ENCODE measurements at regions of chr6 and their contacts with region 1.

Region 1: GRCh38 chr6:134882426-134883038 is 67.4 kb downstream of the ALDH8A1 start:
- DNase-seq: peak; percentile 80
- H3K4me3 Mint-ChIP-seq: no peak overlapping the region
- H3K27ac Mint-ChIP-seq: no peak overlapping the region
- H3K4me1 Mint-ChIP-seq: no peaks in the 10 kb centered on the region
- H3K27me3 Mint-ChIP-seq: peaks cover 10% of the 10 kb centered on the region

Region 2: DNA sequence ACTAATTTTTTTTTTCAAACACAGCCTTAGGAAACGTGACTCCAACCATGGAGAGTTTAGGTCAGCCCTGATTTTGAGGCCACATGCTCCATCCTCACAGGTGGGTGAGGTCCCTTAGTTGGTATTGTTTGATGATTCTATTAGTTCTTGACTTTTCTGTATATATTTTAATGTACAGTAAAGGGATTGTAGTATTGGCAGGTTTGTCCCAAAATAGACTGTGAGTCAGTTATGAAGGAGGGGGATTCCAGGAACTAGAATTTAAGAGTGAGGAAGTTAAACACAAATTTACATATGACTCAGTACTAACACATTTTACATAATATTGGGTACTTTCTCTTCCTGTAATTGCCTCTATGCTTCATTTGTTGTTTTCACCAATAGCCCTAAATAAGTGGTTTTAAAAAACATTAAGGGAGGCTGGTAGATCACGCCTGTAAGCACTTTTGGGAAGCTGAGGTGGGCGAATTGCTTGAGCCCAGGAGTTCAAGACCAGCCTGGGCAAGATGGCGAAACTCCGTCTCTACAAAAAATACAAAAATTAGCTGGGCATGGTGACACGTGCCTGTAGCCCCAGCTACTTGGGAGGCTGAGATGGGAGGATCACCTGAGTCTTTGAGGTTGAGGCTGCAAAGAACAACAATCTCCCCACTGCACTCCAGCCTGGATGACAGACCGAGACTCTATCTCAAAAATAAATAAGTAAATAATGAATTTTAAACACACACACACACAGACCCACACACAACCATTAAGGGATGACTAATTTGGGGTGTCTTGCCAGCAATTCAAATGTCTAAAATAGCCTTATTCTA is 646.4 kb before region 1 on chr6:
- CTCF ChIA-PET with region 1: no interaction called
- intact Hi-C with region 1: no loop called
- DNase-seq: peak; percentile 41
- H3K4me3 Mint-ChIP-seq: peak overlapping the region; percentile 15
- H3K27ac Mint-ChIP-seq: peak overlapping the region; percentile 95
- H3K4me1 Mint-ChIP-seq: peaks cover 57% of the 10 kb centered on the region
- H3K27me3 Mint-ChIP-seq: no peaks in the 10 kb centered on the region

Region 3: GRCh38 chr6:134822920-134823709 is 59.4 kb before region 1 on chr6:
- CTCF ChIA-PET with region 1: interaction called, 15 read pairs
- intact Hi-C with region 1: loop called (anchors 1 kb)
- DNase-seq: peak; percentile 39
- H3K4me3 Mint-ChIP-seq: no peak overlapping the region
- H3K27ac Mint-ChIP-seq: no peak overlapping the region
- H3K4me1 Mint-ChIP-seq: no peaks in the 10 kb centered on the region
- H3K27me3 Mint-ChIP-seq: no peaks in the 10 kb centered on the region

Measured in activated naive CD4-positive, alpha-beta T cell treated with anti-CD3 and anti-CD28 coated beads for 36 hours (primary cell).